ENCODE measurements at regions of chr2 and their contacts with region 1.

Region 1: DNA sequence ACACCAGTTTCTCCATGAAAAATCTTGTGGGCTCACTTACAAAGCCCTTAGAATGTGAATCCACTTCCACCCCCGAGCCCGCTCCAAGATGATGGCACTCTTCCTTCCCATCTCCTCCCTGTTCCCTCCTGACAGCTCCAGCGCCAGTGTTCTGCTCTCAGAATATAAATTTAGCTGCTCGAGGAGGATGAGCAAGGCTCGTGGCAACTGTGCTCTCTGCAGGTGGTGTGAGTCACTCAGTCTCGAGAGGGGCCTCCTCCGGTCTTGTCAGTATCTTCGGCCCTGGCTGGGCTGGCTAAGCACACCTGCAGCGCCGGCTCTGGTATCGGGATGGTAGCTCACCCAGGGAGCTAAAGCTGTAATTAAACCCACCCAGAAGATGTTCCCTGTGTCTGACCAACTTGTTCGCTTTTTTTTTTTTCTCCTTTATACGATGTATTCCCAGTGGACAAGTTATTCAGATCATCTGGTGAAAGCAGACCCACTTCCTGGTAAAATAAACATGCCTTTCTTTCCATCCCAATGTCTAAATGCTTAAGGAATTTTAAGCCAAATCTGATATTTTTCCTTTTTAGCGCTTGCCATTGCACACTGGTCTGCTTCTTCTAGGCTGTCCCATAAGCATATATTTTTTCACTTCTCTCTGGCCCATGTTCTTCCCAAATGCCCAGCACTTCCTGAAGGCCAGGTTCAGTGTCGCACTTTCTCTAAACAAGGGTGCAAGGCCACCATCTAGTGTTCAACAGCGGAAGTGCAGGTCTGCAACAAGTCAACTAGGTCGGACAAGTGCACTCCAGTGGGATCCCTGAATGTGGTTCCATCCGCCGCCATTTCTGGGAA is 31.4 kb upstream of the YPEL5 start:
- DNase-seq: peak; percentile 85
- ATAC-seq: peak; percentile 95
- H3K4me3 ChIP-seq: no peak overlapping the region
- H3K27ac ChIP-seq: no peak overlapping the region
- H3K4me1 ChIP-seq: no peaks in the 10 kb centered on the region
- H3K27me3 ChIP-seq: no peaks in the 10 kb centered on the region
- CTCF ChIP-seq: peak; percentile 91

Region 2: DNA sequence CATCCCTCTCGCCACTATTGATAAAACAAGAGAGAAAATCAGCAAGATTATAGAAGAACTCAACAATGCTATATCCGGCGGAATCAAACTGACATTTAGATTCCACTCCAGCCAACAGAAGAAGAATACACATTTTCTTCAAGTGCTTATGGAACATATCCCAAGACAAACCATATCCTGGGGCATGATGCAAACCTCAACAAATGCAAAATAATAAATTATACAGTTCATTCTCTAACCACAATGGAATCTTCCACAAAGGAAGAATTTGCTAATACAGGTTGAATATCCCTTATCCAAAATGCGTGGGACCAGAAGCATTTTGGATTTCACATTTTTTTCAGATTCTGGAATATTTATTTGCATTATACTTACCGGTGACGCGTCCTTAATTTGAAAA is 20.0 kb before region 1 on chr2:
- CTCF ChIA-PET with region 1: interaction called, 4 read pairs
- POLR2A ChIA-PET with region 1: no interaction called
- in situ Hi-C with region 1: no loop called
- intact Hi-C with region 1: loop called (anchors 2 kb)
- DNase-seq: no peak
- ATAC-seq: no peak
- H3K4me3 ChIP-seq: no peak overlapping the region
- H3K27ac ChIP-seq: no peak overlapping the region
- H3K4me1 ChIP-seq: no peaks in the 10 kb centered on the region
- H3K27me3 ChIP-seq: peaks cover 15% of the 10 kb centered on the region
- CTCF ChIP-seq: no peak

Region 3: GRCh38 chr2:31216734-31217133 is 1101.4 kb after region 1 on chr2:
- CTCF ChIA-PET with region 1: no interaction called
- POLR2A ChIA-PET with region 1: interaction called, 13 read pairs
- in situ Hi-C with region 1: no loop called
- intact Hi-C with region 1: no loop called
- DNase-seq: no peak
- ATAC-seq: no peak
- H3K4me3 ChIP-seq: no peak overlapping the region
- H3K27ac ChIP-seq: no peak overlapping the region
- H3K4me1 ChIP-seq: no peaks in the 10 kb centered on the region
- H3K27me3 ChIP-seq: peaks cover 10% of the 10 kb centered on the region
- CTCF ChIP-seq: no peak

Measured in Panc1 (cell line).